Esophagus muscularis mucosa (tissue), 4 donors: ENCODE measurements at regions of chr9 and their contacts with region 1.

Region 1: DNA sequence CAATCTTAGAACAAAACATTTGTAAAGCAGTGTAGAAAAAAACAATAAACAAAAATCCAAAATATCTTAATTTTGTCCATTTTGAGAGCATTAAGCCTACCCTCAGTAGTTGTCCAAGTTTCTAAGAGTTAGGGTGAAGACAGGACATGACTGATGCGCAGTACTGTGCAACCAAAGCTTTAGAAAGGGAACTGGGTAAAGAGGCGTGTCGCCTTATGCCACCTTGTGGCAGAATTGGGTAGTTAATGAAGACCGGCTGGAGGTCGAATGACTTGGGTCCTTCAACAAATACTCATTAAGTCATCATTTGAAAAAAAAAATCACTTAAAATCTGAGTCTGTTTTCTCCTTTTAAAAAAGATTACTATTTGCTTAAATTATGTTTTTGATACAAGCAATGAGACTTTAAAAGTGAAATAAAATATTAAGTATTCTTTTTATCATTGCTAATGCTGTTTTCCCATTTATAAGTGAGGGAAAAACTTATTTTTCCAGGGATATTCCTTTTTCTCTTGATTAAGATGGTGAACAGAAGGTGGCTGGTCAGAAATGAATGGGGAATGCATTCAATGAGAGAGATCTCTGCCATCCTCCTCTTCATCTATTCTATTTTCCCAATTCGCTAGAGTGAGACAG is 3.5 kb upstream of the RNF20 start:
- DNase-seq: no peak
- H3K4me3 ChIP-seq: no peak overlapping the region
- H3K27ac ChIP-seq: no peak overlapping the region
- H3K4me1 ChIP-seq: peaks cover 10 to 17% (median 15%) of the 10 kb centered on the region in 4 donors
- H3K27me3 ChIP-seq: peaks cover 0 to 2% (median 0%) of the 10 kb centered on the region in 4 donors
- CTCF ChIP-seq: peak; percentile 82 to 85 (median 83)
- EP300 ChIP-seq: no peak
- POLR2A ChIP-seq: no peak

Region 2: DNA sequence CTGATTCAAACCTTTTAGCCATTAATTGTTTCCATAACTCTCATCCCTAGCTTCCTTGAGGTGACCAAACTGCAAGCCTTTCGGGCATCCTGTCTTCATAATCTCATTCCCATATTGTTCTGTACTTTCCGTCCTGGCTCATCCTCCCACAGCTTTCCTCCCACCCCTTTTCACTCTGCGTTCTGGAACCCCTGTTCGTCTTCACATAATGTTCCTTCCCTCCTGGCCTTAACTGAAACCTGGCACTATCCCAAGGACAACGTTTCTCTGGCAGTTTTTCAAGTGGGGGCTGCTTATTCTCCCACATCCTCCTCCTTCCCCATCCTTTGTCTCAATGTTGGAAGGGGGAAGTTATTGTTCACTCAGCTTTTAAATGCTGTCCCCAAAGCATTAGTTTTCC is 130.1 kb before region 1 on chr9:
- intact Hi-C with region 1: loop called (anchors 2 kb)
- DNase-seq: no peak
- H3K4me3 ChIP-seq: peak overlapping the region; percentile 65 to 85 (median 68)
- H3K27ac ChIP-seq: peak overlapping the region in 1 of 4 donors; percentile 84
- H3K4me1 ChIP-seq: peaks cover 34 to 53% (median 47%) of the 10 kb centered on the region in 4 donors
- H3K27me3 ChIP-seq: no peaks in the 10 kb centered on the region
- CTCF ChIP-seq: no peak
- EP300 ChIP-seq: no peak
- POLR2A ChIP-seq: no peak

Region 3: DNA sequence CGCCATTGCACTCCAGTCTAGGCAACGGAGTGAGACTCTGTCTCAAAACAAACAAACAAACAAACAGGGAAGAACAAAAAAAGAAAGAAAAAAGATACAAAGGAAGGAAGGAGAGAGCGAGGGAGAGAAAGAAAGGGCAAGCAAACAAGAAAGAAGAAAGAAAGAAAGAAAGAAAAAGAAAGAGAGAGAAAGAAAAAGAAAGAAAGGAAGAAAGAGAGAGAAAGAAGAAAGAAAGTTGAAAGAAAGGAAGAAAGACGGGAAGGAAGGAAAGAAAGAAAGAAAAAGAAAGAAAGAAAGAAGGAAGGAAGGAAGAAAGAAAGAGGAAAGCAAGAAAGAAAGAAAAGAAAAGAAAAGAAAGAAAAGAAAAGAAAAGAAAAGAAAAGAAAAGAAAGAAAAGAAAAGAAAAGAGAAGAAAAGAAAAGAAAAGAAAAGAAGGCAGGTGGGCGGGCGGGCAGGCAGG is 81.5 kb before region 1 on chr9:
- intact Hi-C with region 1: no loop called
- DNase-seq: no peak
- H3K4me3 ChIP-seq: peak overlapping the region; percentile 54 to 72 (median 59)
- H3K27ac ChIP-seq: peak overlapping the region in 3 of 4 donors; percentile 62 to 69 (median 69)
- H3K4me1 ChIP-seq: peaks cover 0 to 14% (median 6%) of the 10 kb centered on the region in 4 donors
- H3K27me3 ChIP-seq: peaks cover 0 to 11% (median 0%) of the 10 kb centered on the region in 4 donors
- CTCF ChIP-seq: no peak
- EP300 ChIP-seq: no peak
- POLR2A ChIP-seq: no peak

Region 4: GRCh38 chr9:101458955-101459631 is 71.1 kb before region 1 on chr9:
- intact Hi-C with region 1: loop called (anchors 2 kb)
- DNase-seq: no peak
- H3K4me3 ChIP-seq: no peak overlapping the region
- H3K27ac ChIP-seq: no peak overlapping the region
- H3K4me1 ChIP-seq: no peaks in the 10 kb centered on the region
- H3K27me3 ChIP-seq: no peaks in the 10 kb centered on the region
- CTCF ChIP-seq: peak; percentile 65 to 79 (median 75)
- EP300 ChIP-seq: no peak
- POLR2A ChIP-seq: no peak